H1 (cell line): ENCODE measurements at regions of chr2 and their contacts with region 1.

Region 1: DNA sequence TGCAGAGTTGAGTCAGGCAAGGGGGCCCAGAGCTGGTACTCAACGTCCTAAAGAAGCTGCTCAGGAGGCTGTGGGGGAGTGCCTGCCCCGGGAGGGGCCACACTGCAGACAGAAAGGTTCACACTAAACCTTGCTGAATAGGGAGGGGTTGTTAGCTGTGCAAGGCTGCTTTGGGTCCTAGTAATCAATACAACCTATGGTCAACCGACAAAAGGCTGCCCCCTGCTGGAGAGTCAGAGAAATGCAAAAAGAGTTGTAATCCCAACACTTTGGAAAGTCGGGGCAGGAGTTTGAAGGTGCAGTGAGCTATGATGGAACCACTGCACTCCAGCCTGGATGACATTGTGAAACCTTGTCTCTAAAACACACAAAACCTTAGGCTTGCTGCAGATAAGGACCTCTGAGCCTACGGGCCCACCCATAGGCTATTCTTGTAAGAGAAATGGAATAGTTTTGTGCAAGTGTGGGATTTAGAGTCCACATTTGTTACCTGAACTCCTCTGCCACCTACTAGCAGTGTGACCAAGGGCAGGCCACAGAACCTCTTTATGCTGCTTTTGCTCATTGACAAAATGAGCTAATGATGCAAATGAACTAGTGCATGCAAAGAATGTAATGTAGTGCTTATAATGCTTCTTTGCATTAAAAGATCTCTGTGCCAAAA is 81.5 kb downstream of the PRPF40A start:
- DNase-seq: peak; percentile 36 to 90
- H3K4me3 ChIP-seq: no peak overlapping the region
- H3K27ac ChIP-seq: no peak overlapping the region
- H3K4me1 ChIP-seq: no peaks in the 10 kb centered on the region
- H3K27me3 ChIP-seq: peaks cover 0 to 1% (median 0%) of the 10 kb centered on the region in 4 experiments; a peak in 1 of 7 replicates
- CTCF ChIP-seq: peak; percentile 32 to 82 (median 73)
- EP300 ChIP-seq: no peak
- POLR2A ChIP-seq: no peak
- RAD21 ChIP-seq: peak; percentile 87 to 88

Region 2: DNA sequence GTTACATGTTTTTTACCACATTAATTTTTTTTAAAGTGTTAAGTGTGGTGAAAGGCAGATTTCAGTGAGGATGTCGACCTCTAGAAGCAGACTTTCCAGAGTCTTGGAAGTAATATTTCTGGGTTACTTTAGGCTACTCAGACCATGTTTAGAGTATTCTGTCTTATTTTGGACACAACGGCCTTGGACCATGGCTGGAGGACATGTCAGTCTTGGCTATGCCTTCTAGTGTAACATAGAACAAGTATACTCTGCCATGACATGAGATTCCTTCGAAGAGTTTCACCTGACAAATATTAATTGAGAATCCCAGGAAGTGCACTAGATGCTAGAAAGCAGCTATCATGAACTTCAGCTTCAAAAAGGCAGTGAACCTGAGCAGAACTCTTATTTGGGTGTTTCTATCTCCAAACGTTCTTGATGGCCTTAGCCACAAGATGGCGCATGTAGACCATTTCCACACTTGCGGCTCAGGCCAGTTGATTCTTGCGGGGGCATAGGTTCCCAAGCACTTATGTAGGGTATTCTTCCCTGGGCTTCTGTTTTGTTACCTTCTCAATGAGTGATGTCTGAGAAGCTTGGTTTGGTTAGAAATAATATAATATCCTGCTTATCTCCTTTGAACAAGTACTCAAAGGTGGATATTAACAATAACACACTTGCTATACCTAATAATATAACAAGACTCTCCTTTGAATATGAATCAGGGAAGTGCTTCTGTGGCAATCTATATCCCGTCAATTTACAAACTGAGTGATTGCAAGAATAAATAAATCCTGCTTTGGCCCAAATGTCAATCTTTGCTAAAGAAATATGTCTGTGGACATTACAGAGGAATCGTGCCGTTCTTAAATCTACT is 598.9 kb before region 1 on chr2:
- CTCF ChIA-PET with region 1: interaction called, 15 read pairs
- POLR2A ChIA-PET with region 1: no interaction called
- DNase-seq: peak; percentile 41 to 66
- H3K4me3 ChIP-seq: no peak overlapping the region
- H3K27ac ChIP-seq: no peak overlapping the region
- H3K4me1 ChIP-seq: peaks cover 6 to 18% (median 13%) of the 10 kb centered on the region in 4 experiments; a peak in 6 of 7 replicates
- H3K27me3 ChIP-seq: peaks cover 0 to 29% (median 14%) of the 10 kb centered on the region in 4 experiments; a peak in 5 of 7 replicates
- CTCF ChIP-seq: peak; percentile 63 to 89 (median 85)
- EP300 ChIP-seq: no peak
- POLR2A ChIP-seq: no peak
- RAD21 ChIP-seq: peak; percentile 96 to 98

Region 3: DNA sequence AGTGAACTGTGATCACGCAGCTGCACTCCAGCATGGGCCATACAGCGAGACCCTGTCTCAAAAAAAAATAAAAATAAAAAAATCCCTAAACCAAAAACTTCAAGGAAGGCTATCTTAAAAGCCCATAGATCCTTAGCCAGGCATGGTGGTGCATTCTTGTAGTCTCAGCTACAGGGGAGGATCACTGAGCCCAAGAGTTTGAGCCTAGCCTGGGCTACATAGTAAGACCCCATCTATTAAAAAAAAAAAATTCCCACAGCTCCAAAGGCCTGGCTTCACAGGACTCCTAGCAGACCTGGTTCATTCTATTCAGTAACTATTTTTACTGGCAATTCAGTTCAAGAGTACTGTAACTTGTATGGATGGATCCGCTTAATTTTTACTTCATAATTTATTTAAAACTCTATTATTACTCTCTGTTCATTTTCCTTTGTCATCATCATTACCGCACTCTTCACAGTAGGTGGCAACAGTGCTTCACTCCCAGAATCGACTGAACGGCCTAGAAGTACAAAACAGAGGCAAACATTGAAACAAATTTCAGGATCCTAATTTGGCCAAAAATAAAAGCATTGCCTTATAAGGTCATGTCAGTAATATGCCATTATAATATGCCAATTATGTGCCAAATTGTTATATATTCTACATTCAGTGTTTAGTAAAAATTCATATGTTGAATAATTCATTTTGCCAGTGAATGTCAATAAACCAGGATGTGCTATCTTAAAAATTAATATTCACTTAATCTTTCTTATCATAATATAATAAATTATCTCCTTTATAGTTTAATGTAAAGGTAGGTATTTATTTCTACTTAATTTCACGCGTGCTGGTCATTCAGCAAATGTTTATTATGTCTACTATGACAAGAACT is 445.9 kb before region 1 on chr2:
- CTCF ChIA-PET with region 1: interaction called, 16 read pairs
- POLR2A ChIA-PET with region 1: interaction called, 3 read pairs
- DNase-seq: no peak
- H3K4me3 ChIP-seq: no peak overlapping the region
- H3K27ac ChIP-seq: no peak overlapping the region
- H3K4me1 ChIP-seq: no peaks in the 10 kb centered on the region
- H3K27me3 ChIP-seq: peaks cover 3 to 8% (median 4%) of the 10 kb centered on the region in 4 experiments; a peak in 5 of 7 replicates
- CTCF ChIP-seq: peak in 2 of 3 experiments; percentile 44 to 53; a peak in 3 of 4 replicates
- EP300 ChIP-seq: no peak
- POLR2A ChIP-seq: no peak
- RAD21 ChIP-seq: peak; percentile 87 to 90

Region 4: DNA sequence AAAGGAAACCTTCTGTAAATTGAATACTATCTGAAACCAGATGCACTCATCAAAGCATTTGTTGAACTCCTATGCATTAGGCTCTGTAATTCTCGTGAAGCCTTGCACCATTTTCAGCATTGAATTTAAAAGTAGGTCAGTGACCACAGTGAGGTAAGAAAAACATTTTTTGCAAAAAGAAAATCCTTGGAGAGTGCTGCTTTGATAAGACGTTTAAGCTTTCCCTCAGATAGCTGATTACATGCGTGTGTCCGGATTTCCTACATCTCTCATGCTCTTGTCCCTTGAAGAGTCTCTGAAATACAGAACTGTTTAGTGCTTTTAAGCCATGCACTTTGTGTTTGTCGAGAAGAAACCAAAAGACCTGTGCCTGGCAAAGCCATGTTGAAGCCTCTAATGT is 187.2 kb before region 1 on chr2:
- CTCF ChIA-PET with region 1: no interaction called
- POLR2A ChIA-PET with region 1: no interaction called
- DNase-seq: no peak
- H3K4me3 ChIP-seq: no peak overlapping the region
- H3K27ac ChIP-seq: no peak overlapping the region
- H3K4me1 ChIP-seq: peaks cover 7 to 28% (median 17%) of the 10 kb centered on the region in 4 experiments; a peak in 5 of 7 replicates
- H3K27me3 ChIP-seq: no peaks in the 10 kb centered on the region
- CTCF ChIP-seq: no peak
- EP300 ChIP-seq: no peak
- POLR2A ChIP-seq: no peak
- RAD21 ChIP-seq: no peak

Region 5: DNA sequence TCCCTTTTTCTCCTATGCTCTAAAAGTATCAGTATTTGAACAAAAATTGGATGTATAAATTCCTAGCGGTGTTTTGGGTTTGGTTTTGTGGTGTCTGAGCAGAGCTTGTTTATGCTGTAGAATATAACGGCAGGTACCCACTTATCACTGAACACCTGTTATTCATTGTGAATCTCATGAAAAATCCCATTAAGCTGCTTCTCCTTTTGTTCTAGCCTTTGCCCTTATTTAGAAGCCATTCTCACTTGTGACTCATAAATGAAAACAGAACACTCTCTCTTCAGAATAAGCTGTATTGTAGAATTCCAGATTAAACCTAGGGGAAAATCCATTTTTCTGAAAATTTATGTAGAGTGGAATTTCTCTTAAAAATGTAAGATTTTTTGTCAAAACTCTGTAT is 22.5 kb before region 1 on chr2:
- CTCF ChIA-PET with region 1: interaction called, 15 read pairs
- POLR2A ChIA-PET with region 1: interaction called, 3 read pairs
- DNase-seq: no peak
- H3K4me3 ChIP-seq: no peak overlapping the region
- H3K27ac ChIP-seq: no peak overlapping the region
- H3K4me1 ChIP-seq: no peaks in the 10 kb centered on the region
- H3K27me3 ChIP-seq: no peaks in the 10 kb centered on the region
- CTCF ChIP-seq: no peak
- EP300 ChIP-seq: no peak
- POLR2A ChIP-seq: no peak
- RAD21 ChIP-seq: no peak

Region 6: DNA sequence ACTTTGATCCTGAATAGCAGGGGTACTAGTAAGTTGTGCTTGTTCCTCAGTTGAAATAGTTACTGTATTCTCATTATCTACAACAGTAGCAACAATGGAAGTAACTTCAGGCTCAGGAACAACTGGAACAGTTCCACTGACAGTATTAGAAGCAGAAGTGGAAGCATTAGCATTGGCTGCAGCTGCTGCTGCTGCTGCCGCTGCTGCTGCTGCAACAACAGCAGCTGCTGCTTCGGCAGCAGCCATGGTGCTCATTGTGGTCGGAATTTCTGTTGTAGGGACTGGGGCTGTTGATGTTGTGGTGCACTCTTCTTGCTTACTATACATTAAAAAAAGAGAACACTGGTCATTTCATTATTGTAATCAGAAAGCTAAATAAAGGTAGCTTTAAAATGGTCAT is 40.7 kb after region 1 on chr2:
- CTCF ChIA-PET with region 1: no interaction called
- POLR2A ChIA-PET with region 1: no interaction called
- DNase-seq: no peak
- H3K4me3 ChIP-seq: no peak overlapping the region
- H3K27ac ChIP-seq: no peak overlapping the region
- H3K4me1 ChIP-seq: no peaks in the 10 kb centered on the region
- H3K27me3 ChIP-seq: no peaks in the 10 kb centered on the region
- CTCF ChIP-seq: no peak
- EP300 ChIP-seq: no peak
- POLR2A ChIP-seq: no peak
- RAD21 ChIP-seq: no peak

Region 7: DNA sequence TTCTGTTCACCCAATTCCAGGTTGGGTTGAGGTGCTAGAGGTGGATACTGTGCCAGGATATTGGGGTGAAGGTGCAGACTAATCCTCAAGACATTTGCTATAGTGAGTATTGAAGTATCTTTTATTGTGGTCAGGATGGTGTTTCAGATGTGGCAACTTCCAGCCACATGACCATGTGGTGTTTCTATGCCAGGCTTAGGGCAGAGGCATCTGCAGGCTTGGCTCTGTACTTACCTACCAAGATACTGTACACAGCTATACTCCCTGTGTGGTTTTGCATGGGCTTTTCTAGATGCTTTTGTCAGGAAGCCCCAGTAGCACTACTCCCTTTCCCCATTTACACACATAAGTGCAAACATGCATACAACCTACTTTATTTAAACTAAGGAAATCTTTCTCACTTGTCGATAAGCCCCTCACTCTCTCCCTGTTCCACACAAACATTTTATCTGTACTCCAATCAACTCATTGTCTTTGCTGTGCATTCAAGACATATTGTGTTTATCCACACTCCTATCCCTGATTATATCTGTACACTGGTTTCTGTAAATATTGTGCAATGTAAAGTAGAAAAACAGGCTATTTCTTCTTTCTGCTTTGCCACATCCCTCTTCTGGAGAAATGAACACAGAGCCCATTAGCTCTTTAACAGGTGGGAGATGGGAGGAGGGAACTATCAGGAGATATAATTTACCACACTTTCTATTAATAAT is 95.0 kb after region 1 on chr2:
- CTCF ChIA-PET with region 1: no interaction called
- POLR2A ChIA-PET with region 1: no interaction called
- DNase-seq: no peak
- H3K4me3 ChIP-seq: no peak overlapping the region
- H3K27ac ChIP-seq: no peak overlapping the region
- H3K4me1 ChIP-seq: no peaks in the 10 kb centered on the region
- H3K27me3 ChIP-seq: no peaks in the 10 kb centered on the region
- CTCF ChIP-seq: no peak
- EP300 ChIP-seq: no peak
- POLR2A ChIP-seq: no peak
- RAD21 ChIP-seq: no peak